ENCODE measurements at regions of chr17 and their contacts with region 1.

Region 1: GRCh38 chr17:38557836-38558727 is 47.7 kb downstream of the SRCIN1 start:
- DNase-seq: peak; percentile 28
- H3K4me3 ChIP-seq: peak overlapping the region; percentile 54
- CTCF ChIP-seq: peak; percentile 99

Region 2: DNA sequence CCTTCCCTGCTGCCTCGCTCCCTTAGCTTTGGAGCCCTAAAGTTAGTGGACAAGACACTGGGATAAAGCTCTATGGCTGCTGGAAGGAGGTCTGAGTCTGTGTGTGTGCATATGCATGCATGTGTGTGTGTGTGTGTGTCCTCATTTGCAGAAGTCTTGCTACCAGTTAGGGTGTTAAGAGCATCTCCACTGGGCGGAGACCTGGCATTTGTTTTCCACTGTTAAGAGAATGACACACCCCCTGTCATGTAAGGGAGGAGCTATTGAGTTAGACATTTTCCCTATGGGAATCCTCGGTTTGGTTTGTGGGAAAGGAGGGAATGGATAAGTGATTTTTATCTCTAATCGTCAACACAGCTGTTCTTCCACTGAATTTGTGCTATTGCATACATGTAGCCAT is 154.6 kb before region 1 on chr17:
- CTCF ChIA-PET with region 1: no interaction called
- POLR2A ChIA-PET with region 1: no interaction called
- DNase-seq: no peak
- H3K4me3 ChIP-seq: no peak overlapping the region
- CTCF ChIP-seq: no peak

Region 3: GRCh38 chr17:38464723-38465390 is 93.2 kb before region 1 on chr17:
- CTCF ChIA-PET with region 1: no interaction called
- POLR2A ChIA-PET with region 1: no interaction called
- DNase-seq: peak; percentile 74
- H3K4me3 ChIP-seq: peak overlapping the region; percentile 66
- CTCF ChIP-seq: no peak

Region 4: DNA sequence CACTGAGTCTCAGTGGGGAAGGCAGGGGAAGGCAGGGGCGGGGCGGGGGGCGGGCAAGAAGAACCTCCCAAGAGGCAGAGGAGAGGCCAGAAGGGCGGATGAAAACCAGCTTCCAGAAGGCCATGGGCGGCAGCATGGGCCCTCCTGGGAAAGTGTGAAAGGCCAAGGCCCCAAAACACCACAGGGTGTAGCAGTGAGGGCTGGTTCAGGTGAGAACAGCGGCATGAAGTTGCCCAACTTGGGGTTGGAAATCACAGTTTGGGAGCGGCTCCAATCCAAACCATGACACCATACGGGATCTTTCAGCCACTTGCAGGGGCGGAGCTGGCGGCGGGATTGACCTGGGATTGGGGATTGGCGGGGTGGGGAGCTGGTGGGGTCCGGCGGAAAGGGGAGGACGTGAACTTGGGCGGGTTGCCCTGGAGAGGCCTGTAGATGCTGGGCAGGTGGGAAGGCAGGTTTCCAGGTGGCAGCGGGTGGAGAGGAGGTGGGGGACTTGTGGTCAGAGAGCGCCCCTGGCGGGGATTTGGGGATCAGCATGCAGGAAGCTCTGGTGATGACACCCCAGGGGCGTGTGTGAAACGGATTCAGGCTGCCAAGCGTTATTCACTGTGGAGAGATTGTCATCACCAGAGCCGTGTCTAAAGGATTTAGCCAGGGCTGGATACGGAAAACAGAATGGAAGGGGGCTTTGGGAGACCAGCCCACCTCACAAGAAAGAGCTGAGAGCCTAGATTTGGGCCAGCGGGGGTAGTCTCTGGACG is 48.9 kb before region 1 on chr17:
- CTCF ChIA-PET with region 1: interaction called, 16 read pairs
- POLR2A ChIA-PET with region 1: no interaction called
- DNase-seq: peak; percentile 66
- H3K4me3 ChIP-seq: no peak overlapping the region
- CTCF ChIP-seq: peak; percentile 89

Region 5: GRCh38 chr17:38578229-38579082 is 20.4 kb after region 1 on chr17:
- CTCF ChIA-PET with region 1: interaction called, 25 read pairs
- POLR2A ChIA-PET with region 1: no interaction called
- DNase-seq: no peak
- H3K4me3 ChIP-seq: no peak overlapping the region
- CTCF ChIP-seq: no peak

Region 6: DNA sequence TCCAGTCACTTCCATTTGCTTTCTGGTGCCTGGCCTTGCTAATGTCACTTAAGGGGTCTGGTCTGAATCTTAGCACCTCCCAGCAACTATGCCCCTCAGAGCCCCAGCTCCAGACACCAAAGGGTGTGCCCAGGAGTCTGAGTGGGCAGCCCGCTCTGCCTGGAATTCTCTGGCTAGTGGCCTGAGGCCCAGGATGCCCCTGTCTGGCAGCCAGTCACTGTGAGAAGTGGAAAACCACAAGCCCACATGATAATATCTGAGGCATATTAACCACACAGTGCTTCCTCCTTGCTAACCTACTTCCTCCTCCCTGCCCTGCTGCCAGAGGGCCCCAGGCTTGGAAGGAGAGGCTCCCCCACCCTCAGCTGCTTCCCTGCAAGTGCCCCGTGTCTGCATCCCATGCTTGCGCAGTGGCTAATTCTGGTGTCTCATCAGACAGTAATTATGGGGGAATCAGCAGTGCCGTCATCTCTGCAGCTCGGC is 33.7 kb after region 1 on chr17:
- CTCF ChIA-PET with region 1: interaction called, 29 read pairs
- POLR2A ChIA-PET with region 1: no interaction called
- DNase-seq: no peak
- H3K4me3 ChIP-seq: no peak overlapping the region
- CTCF ChIP-seq: no peak

Region 7: GRCh38 chr17:38605888-38606645 is 48.0 kb after region 1 on chr17 and contains the start of gene SRCIN1:
- CTCF ChIA-PET with region 1: interaction called, 18 read pairs
- POLR2A ChIA-PET with region 1: no interaction called
- DNase-seq: no peak
- H3K4me3 ChIP-seq: peak within 1 kb of the TSS; percentile 40
- CTCF ChIP-seq: peak; percentile 63